Lower lobe of right lung (tissue), 2 donors: ENCODE measurements at regions of chr14 and their contacts with region 1.

Region 1: GRCh38 chr14:24806061-24806678 is 172.2 kb upstream of the GZMB start:
- DNase-seq: peak; percentile 61
- ATAC-seq: peak; percentile 74 to 87
- H3K4me3 ChIP-seq: no peak overlapping the region
- H3K27ac ChIP-seq: no peak overlapping the region
- H3K4me1 ChIP-seq: no peaks in the 10 kb centered on the region
- H3K27me3 ChIP-seq: no peaks in the 10 kb centered on the region
- CTCF ChIP-seq: peak; percentile 81

Region 2: DNA sequence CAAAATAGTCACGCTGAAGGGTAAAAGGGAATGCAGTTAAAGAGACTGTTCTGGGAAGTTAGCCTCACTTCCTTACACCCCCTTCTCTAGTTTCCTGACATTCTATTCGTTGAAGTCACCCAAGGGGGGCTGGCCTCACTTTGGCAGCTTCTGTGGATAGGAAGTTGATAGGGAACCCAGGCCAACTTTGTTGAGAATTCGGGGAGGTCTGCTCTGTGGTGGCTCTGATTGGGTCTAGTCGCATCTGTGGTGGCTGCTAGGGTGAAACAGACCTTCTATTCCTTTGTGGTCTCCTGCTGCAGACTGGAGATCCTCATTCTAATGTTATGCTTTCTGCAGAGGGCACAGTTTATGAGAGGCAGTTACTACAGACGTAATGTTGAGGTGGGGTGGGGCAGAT is 143.4 kb before region 1 on chr14:
- intact Hi-C with region 1: no loop called
- DNase-seq: no peak
- ATAC-seq: peak; percentile 35 to 40
- H3K4me3 ChIP-seq: no peak overlapping the region
- H3K27ac ChIP-seq: peak overlapping the region; percentile 11
- H3K4me1 ChIP-seq: peaks cover 12% of the 10 kb centered on the region
- H3K27me3 ChIP-seq: no peaks in the 10 kb centered on the region
- CTCF ChIP-seq: no peak

Region 3: DNA sequence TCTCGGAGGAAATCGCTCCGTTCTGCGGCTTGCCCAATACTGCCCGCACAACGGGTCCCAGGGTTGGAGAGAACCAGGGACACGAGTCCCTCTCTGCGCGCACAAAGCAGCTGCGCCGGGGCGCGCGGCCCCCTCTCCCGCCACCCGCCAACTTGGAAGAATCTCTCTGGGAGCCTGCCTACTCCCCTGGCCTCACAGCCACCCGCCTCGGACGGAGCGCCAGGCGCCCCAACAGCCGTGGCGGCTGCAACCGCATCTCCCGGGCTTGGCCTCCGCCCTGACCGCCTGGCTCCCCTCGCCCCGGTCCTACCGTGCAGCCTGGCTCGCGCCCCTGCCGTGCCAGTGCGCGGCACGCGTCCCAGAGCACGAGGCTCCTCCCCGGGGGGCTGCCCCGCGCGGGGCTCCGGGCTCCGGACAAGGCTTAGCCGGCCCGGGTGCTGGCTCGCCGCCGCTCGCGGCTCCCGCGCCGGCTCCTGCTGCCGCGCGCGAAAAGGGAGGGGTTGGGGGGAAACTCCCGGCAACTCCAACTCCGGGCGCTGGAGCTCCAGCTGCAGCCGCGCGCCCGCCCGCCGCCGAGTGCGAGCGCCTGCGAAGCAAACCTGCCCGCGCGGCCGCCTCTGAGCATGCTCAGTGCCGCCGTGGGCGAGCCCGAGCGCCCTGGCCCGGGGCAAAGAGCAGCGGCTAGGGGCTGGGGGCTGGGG is 243.5 kb after region 1 on chr14 and contains the start of gene STXBP6:
- intact Hi-C with region 1: loop called (anchors 10 kb)
- DNase-seq: peak; percentile 65
- ATAC-seq: peak; percentile 89 to 94
- H3K4me3 ChIP-seq: peak within 1 kb of the TSS; percentile 71
- H3K27ac ChIP-seq: peak within 1 kb of the TSS; percentile 77
- H3K4me1 ChIP-seq: peaks cover 32% of the 10 kb centered on the region
- H3K27me3 ChIP-seq: peaks cover 41% of the 10 kb centered on the region
- CTCF ChIP-seq: no peak
- total RNA-seq, gene STXBP6: 29.4 TPM

Region 4: DNA sequence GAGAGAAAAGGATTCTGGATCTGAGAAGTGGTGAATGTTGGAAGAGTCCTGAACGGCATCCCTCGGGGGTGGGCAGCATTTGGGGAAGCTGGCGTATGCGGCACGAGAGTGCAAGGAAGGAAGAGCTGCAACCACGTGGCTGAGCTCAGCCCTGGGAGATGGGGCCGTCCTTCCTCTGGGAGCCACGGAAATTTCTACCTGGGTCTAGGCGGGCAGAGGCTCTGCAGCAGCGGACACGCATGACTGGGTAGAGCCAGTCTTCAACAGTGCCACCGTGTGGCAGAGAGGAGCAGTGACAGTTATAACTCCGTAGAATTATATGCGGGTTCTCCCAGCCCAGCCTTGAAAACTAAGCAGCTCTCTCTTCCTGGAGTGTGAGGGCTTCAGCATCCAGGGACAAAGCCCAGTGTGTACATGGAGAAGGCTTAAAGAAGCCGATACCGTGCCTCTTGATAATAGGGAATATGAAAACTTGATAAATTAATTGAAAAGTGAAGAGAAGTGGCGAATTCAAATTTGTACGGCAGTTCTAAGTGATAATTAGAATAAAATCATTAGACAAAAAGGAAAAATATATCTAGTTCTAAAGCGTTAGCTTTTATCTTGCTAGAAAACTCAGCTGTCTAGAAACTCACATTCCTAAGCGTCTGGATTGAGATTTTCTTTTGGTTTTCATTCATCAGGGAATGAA is 326.7 kb after region 1 on chr14:
- intact Hi-C with region 1: loop called (anchors 10 kb)
- DNase-seq: peak; percentile 66
- ATAC-seq: peak; percentile 94 to 96
- H3K4me3 ChIP-seq: no peak overlapping the region
- H3K27ac ChIP-seq: no peak overlapping the region
- H3K4me1 ChIP-seq: peaks cover 3% of the 10 kb centered on the region
- H3K27me3 ChIP-seq: peaks cover 10% of the 10 kb centered on the region
- CTCF ChIP-seq: peak; percentile 85

Region 5: GRCh38 chr14:25588751-25589150 is 782.6 kb after region 1 on chr14:
- intact Hi-C with region 1: no loop called
- DNase-seq: no peak
- ATAC-seq: no peak
- H3K4me3 ChIP-seq: no peak overlapping the region
- H3K27ac ChIP-seq: no peak overlapping the region
- H3K4me1 ChIP-seq: no peaks in the 10 kb centered on the region
- H3K27me3 ChIP-seq: no peaks in the 10 kb centered on the region
- CTCF ChIP-seq: no peak